A673 (cell line): ENCODE measurements at regions of chr21 and their contacts with region 1.

Region 1: DNA sequence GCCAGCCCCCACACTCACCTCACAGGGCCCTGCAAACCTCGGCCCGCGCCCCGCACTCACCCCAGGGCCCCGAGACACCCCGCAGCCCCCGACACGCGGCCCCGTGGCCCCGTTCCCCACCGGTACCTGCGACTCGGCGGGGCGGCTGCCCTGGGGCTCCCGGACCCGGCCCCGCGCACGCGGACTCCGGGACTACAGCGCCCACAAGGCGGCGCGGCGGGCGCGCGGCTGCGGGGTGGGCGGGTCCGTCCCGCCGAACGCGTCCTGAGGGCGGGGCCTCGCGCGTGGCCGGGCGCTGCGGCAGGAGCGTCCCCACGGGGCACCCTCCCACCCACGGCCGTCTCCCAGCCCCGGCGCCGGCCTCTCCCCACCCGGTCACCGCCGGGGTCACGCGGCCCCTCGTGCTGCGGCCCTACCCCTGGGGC is at the start of gene SLC19A1:
- DNase-seq: peak; percentile 82
- H3K4me3 ChIP-seq: peak within 1 kb of the TSS; percentile 79
- H3K27ac ChIP-seq: peak within 1 kb of the TSS; percentile 87
- H3K4me1 ChIP-seq: peaks cover 25% of the 10 kb centered on the region
- H3K27me3 ChIP-seq: no peaks in the 10 kb centered on the region
- CTCF ChIP-seq: no peak
- total RNA-seq, gene SLC19A1: 59.6 and 72.1 TPM in 2 replicates

Region 2: GRCh38 chr21:45330075-45330781 is 212.0 kb before region 1 on chr21:
- CTCF ChIA-PET with region 1: no interaction called
- POLR2A ChIA-PET with region 1: no interaction called
- intact Hi-C with region 1: no loop called
- DNase-seq: peak; percentile 50
- H3K4me3 ChIP-seq: no peak overlapping the region
- H3K27ac ChIP-seq: no peak overlapping the region
- H3K4me1 ChIP-seq: no peaks in the 10 kb centered on the region
- H3K27me3 ChIP-seq: no peaks in the 10 kb centered on the region
- CTCF ChIP-seq: no peak

Region 3: GRCh38 chr21:45880097-45881068 is 338.1 kb after region 1 on chr21:
- CTCF ChIA-PET with region 1: no interaction called
- POLR2A ChIA-PET with region 1: no interaction called
- intact Hi-C with region 1: loop called (anchors 10 kb)
- DNase-seq: peak; percentile 92
- H3K4me3 ChIP-seq: no peak overlapping the region
- H3K27ac ChIP-seq: no peak overlapping the region
- H3K4me1 ChIP-seq: peaks cover 7% of the 10 kb centered on the region
- H3K27me3 ChIP-seq: no peaks in the 10 kb centered on the region
- CTCF ChIP-seq: peak; percentile 93